ENCODE measurements at regions of chr2 and their contacts with region 1.

Region 1: GRCh38 chr2:200963124-200963917 is at the start of gene ORC2:
- DNase-seq: peak; percentile 95 to 97
- H3K4me3 ChIP-seq: peak within 1 kb of the TSS; percentile 78 to 87
- H3K27ac ChIP-seq: peak within 1 kb of the TSS; percentile 86 to 87
- H3K4me1 ChIP-seq: peaks cover 0 to 27% (median 22%) of the 10 kb centered on the region in 4 donors
- H3K27me3 ChIP-seq: no peaks in the 10 kb centered on the region
- CTCF ChIP-seq: peak; percentile 65 to 74

Region 2: GRCh38 chr2:200713003-200713703 is 250.2 kb before region 1 on chr2:
- intact Hi-C with region 1: no loop called
- DNase-seq: peak; percentile 81 to 94
- H3K4me3 ChIP-seq: peak overlapping the region; percentile 44 to 50
- H3K27ac ChIP-seq: peak overlapping the region; percentile 57 to 75
- H3K4me1 ChIP-seq: peaks cover 0 to 6% (median 0%) of the 10 kb centered on the region in 4 donors
- H3K27me3 ChIP-seq: no peaks in the 10 kb centered on the region
- CTCF ChIP-seq: peak; percentile 85 to 89

Region 3: DNA sequence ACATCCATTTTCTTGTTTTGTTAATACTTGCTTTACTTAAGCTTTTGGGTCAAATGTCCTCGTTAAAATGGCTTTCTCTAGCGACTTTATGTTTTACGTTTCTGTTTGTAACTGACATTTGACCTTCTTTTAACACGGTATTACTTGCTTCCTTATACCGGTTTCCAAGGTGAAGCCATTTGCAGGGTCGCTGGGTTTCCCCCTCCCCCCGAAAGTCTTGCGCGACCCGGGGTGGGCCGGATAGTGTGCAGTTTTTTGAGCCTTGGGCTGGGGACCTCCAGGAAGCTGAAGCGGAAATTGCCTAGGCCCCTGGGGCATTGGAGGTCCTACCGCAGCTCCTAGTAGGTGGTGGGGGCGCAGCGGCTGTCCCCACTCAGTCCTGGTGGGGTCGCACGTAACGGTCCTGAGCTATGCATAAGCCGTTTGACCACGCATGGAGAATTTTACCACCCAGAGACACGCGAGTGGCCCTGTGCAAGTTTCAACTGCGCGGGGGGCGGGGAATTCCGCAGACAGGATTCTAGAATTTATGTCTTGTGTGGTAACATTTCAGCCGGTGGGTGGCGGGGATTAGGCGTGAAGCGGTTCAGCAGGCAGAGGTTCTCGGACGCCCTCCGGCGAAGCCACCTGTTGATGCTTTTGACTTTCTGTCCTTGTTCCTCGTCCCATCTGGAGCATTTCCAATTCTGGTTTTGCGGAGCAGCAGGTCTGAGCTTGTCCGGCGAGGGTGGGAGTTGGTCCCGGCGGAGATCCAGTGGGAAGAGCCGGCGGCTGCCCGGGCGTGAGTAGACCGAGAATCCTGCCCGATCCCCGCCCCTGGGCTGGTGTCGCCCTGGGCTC is 155.0 kb after region 1 on chr2:
- intact Hi-C with region 1: loop called (anchors 5 kb)
- DNase-seq: peak; percentile 91
- H3K4me3 ChIP-seq: peak overlapping the region; percentile 95 to 98
- H3K27ac ChIP-seq: peak overlapping the region; percentile 100
- H3K4me1 ChIP-seq: peaks cover 0 to 56% (median 12%) of the 10 kb centered on the region in 4 donors
- H3K27me3 ChIP-seq: no peaks in the 10 kb centered on the region
- CTCF ChIP-seq: peak; percentile 43 to 53

Measured in tibial artery (tissue), 4 donors.